CD4-positive, alpha-beta memory T cell (primary cell): ENCODE measurements at regions of chr20 and their contacts with region 1.

Region 1: GRCh38 chr20:50516180-50516934 is 6.2 kb downstream of the PTPN1 start:
- DNase-seq: no peak
- H3K4me3 ChIP-seq: no peak overlapping the region
- H3K4me3 Mint-ChIP-seq: peak overlapping the region; percentile 74 to 98 (median 82)
- H3K27ac ChIP-seq: peak overlapping the region; percentile 65
- H3K27ac Mint-ChIP-seq: peak overlapping the region; percentile 26 to 96 (median 90)
- H3K4me1 ChIP-seq: peaks cover 100% of the 10 kb centered on the region
- H3K4me1 Mint-ChIP-seq: peaks cover 80 to 100% (median 91%) of the 10 kb centered on the region in 4 donors
- H3K27me3 ChIP-seq: no peaks in the 10 kb centered on the region
- H3K27me3 Mint-ChIP-seq: no peaks in the 10 kb centered on the region

Region 2: DNA sequence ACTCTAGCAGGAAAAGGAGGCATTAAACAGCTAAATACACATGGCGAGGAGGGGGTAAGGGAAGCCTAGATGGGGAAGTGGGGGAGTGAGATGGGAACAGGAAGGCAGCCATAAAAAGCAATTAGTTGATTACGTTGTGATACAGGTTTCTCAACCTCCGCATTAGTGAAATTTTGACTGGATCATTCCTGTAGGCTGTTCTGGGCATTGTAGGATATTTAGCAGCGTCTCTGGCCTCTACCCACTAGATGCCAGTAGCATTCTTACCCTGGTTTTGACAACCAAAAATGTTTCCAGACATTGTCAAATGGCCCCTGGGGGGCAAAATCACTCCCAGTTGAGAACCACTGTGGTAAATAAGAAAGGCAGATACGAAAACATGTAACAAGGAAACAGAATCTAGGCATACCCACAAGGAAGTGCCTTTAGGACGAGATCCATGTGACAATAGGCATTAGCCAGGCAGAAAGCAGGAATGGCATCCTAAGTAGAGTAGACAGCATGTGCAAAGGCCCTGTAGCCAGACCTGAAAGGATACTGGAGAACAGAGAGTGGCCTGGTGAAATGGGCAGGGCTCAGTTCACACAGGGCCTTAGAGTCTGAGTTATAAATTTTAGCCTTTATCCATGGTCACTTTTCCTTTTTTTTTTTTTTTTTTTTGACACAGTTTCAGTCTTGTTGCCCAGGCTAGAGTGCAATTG is 31.9 kb before region 1 on chr20:
- CTCF ChIA-PET with region 1: interaction called, 15 read pairs
- POLR2A ChIA-PET with region 1: interaction called, 27 read pairs
- intact Hi-C with region 1: loop called (anchors 2 kb)
- DNase-seq: no peak
- H3K4me3 ChIP-seq: peak overlapping the region in 1 of 2 donors; percentile 68
- H3K4me3 Mint-ChIP-seq: peak overlapping the region; percentile 13 to 98 (median 96)
- H3K27ac ChIP-seq: peak overlapping the region; percentile 81
- H3K27ac Mint-ChIP-seq: peak overlapping the region; percentile 85 to 100 (median 97)
- H3K4me1 ChIP-seq: peaks cover 18% of the 10 kb centered on the region
- H3K4me1 Mint-ChIP-seq: peaks cover 16 to 26% (median 24%) of the 10 kb centered on the region in 4 donors
- H3K27me3 ChIP-seq: no peaks in the 10 kb centered on the region
- H3K27me3 Mint-ChIP-seq: peaks cover 0 to 4% of the 10 kb centered on the region in 2 donors

Region 3: GRCh38 chr20:50504231-50504823 is 12.0 kb before region 1 on chr20:
- CTCF ChIA-PET with region 1: interaction called, 13 read pairs
- POLR2A ChIA-PET with region 1: interaction called, 76 read pairs
- intact Hi-C with region 1: no loop called
- DNase-seq: peak in 1 of 5 donors; percentile 22
- H3K4me3 ChIP-seq: no peak overlapping the region
- H3K4me3 Mint-ChIP-seq: no peak overlapping the region
- H3K27ac ChIP-seq: no peak overlapping the region
- H3K27ac Mint-ChIP-seq: peak overlapping the region in 2 of 7 donors; percentile 32 to 87
- H3K4me1 ChIP-seq: peaks cover 1% of the 10 kb centered on the region
- H3K4me1 Mint-ChIP-seq: peaks cover 0 to 11% (median 3%) of the 10 kb centered on the region in 4 donors
- H3K27me3 ChIP-seq: no peaks in the 10 kb centered on the region
- H3K27me3 Mint-ChIP-seq: no peaks in the 10 kb centered on the region

Region 4: GRCh38 chr20:50528804-50529351 is 12.5 kb after region 1 on chr20:
- CTCF ChIA-PET with region 1: interaction called, 6 read pairs
- POLR2A ChIA-PET with region 1: interaction called, 76 read pairs
- intact Hi-C with region 1: loop called (anchors 2 kb)
- DNase-seq: no peak
- H3K4me3 ChIP-seq: no peak overlapping the region
- H3K4me3 Mint-ChIP-seq: peak overlapping the region in 6 of 8 donors; percentile 8 to 66 (median 22)
- H3K27ac ChIP-seq: no peak overlapping the region
- H3K27ac Mint-ChIP-seq: peak overlapping the region in 2 of 7 donors; percentile 5 to 58
- H3K4me1 ChIP-seq: peaks cover 95% of the 10 kb centered on the region
- H3K4me1 Mint-ChIP-seq: peaks cover 32 to 36% (median 34%) of the 10 kb centered on the region in 4 donors
- H3K27me3 ChIP-seq: no peaks in the 10 kb centered on the region
- H3K27me3 Mint-ChIP-seq: no peaks in the 10 kb centered on the region

Region 5: DNA sequence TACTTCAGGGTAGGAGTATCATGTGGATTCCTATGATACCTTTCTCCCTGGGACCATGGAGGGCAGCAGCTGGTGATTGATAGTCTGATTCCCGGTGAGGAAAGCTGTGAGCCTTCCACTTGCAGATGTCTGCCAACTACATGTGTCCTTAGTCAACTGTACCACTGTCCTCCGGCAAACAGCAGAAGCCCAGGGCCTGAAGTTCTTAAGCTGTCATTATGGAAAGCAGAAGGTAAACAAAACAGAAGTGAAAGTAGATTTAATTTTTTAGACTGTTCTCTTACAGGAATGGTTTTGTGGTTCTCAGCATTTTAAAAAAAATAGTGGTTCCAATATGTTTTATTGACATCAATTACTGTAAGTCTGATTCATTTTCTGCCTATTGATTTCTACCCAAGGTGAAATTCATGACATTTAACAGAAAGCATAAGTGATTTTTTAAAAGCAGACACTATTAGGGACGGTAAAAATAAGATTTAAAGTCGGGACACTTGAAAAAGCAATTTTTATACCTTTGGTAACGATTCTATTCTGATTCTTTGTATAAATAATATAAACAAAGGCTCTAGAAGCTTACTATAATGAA is 30.5 kb after region 1 on chr20:
- CTCF ChIA-PET with region 1: interaction called, 3 read pairs
- POLR2A ChIA-PET with region 1: interaction called, 6 read pairs
- intact Hi-C with region 1: loop called (anchors 2 kb)
- DNase-seq: peak in 1 of 5 donors; percentile 38
- H3K4me3 ChIP-seq: peak overlapping the region in 1 of 2 donors; percentile 26
- H3K4me3 Mint-ChIP-seq: peak overlapping the region; percentile 74 to 92 (median 82)
- H3K27ac ChIP-seq: peak overlapping the region; percentile 30
- H3K27ac Mint-ChIP-seq: peak overlapping the region; percentile 78 to 92 (median 89)
- H3K4me1 ChIP-seq: peaks cover 91% of the 10 kb centered on the region
- H3K4me1 Mint-ChIP-seq: peaks cover 62 to 70% (median 66%) of the 10 kb centered on the region in 4 donors
- H3K27me3 ChIP-seq: no peaks in the 10 kb centered on the region
- H3K27me3 Mint-ChIP-seq: no peaks in the 10 kb centered on the region

Region 6: GRCh38 chr20:50695135-50695872 is 178.9 kb after region 1 on chr20:
- CTCF ChIA-PET with region 1: no interaction called
- POLR2A ChIA-PET with region 1: no interaction called
- intact Hi-C with region 1: no loop called
- DNase-seq: no peak
- H3K4me3 ChIP-seq: no peak overlapping the region
- H3K4me3 Mint-ChIP-seq: no peak overlapping the region
- H3K27ac ChIP-seq: no peak overlapping the region
- H3K27ac Mint-ChIP-seq: no peak overlapping the region
- H3K4me1 ChIP-seq: no peaks in the 10 kb centered on the region
- H3K4me1 Mint-ChIP-seq: peaks cover 0 to 7% (median 4%) of the 10 kb centered on the region in 4 donors
- H3K27me3 ChIP-seq: peaks cover 16% of the 10 kb centered on the region
- H3K27me3 Mint-ChIP-seq: peaks cover 26 to 36% of the 10 kb centered on the region in 2 donors